ENCODE measurements at regions of chr11 and their contacts with region 1.

Region 1: GRCh38 chr11:83071567-83072349 is at the start of gene RAB30:
- H3K4me3 Mint-ChIP-seq: no peak within 1 kb of the TSS
- H3K27ac Mint-ChIP-seq: no peak within 1 kb of the TSS
- H3K4me1 Mint-ChIP-seq: peaks cover 48% of the 10 kb centered on the region
- H3K27me3 Mint-ChIP-seq: peaks cover 24% of the 10 kb centered on the region

Region 2: GRCh38 chr11:83007909-83008580 is 63.7 kb before region 1 on chr11:
- intact Hi-C with region 1: loop called (anchors 2 kb)
- H3K4me3 Mint-ChIP-seq: no peak overlapping the region
- H3K27ac Mint-ChIP-seq: peak overlapping the region; percentile 62
- H3K4me1 Mint-ChIP-seq: peaks cover 23% of the 10 kb centered on the region
- H3K27me3 Mint-ChIP-seq: no peaks in the 10 kb centered on the region

Region 3: DNA sequence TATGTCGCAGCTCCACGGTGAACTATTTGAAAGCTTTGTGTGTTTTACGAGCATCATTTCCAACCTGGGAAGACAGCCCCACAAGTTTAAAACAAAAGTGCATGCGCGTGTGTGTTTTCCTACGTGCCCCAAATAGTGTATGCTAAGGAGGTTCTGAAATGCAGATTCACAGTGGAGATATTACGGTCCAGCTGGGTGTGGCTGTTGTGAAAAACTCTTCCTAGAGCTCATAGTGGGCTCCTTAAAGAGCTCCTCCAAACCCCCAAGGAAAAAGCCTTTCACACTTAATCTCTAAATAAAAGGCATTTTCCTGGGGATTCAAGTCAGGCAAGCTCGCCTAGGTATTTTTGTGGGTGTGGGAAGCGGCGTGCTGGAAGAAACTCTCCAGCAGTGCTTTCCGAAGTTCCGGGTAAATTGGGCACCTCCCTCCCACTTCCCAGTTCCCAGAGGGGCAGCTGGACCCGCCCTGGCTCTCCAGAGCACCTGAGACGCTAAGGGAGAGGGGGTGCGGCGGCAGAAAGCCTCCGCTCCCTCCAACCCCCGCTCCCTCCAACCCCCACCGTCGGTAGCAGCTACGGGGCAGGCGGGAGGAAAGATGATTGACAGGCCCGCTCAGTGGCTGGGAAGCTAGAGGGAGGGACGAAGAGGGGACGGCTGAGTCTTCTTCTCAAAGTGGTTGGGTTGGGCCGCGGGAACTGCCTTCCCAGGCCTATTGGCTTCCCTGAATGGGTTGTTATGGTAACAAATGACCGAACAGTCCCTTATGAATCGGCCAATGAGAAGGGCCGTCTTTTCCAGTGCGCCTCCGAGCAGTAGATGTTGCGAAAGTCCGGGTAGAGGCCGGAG is 84.6 kb after region 1 on chr11:
- intact Hi-C with region 1: loop called (anchors 2 kb)
- H3K4me3 Mint-ChIP-seq: peak overlapping the region; percentile 96
- H3K27ac Mint-ChIP-seq: peak overlapping the region; percentile 100
- H3K4me1 Mint-ChIP-seq: peaks cover 19% of the 10 kb centered on the region
- H3K27me3 Mint-ChIP-seq: no peaks in the 10 kb centered on the region

Region 4: DNA sequence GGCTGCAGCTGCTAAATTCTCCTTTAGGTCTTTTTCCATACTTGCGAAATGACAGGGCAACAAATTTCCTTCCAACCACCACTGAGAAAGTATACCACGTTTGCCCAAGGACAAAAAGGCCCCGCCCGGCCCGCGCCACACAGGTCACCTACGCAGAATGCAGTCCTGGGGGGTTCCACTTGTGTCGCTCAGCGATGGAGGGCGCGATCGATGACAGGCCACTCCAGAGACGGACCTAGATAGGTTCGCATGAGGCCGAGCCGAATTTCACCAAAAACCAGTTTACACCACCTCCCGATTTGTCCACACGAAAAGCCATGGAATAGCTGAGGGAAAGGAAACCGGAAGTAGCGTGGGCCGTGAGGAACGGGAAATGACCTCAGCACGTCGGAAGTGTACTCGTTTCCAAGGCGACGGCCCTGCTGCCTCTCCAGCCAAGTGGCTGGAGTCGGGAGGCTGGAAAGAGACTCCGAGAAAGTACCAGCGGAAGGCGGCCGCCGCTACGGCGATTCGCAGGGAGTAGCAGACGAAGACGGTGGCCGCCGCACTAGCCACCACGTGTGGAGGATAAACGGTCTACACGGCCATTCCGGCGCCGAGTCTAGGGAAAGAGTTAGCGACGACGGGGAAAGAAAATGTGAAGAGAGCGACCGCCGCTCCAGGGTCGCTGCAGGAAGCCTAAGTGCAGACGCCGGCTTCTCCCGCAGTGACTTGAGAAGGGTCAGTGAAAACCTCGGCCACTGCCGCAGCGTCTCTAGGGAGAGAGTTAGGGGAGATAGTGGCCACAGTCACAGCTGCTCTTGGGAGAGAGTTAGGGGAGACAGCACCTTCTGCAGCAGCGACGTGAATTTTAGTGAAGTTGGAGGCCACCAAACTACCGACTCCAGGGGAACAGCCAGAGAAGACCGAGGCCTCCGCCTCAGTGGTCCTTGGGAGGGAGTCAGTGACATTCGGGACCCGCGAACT is 121.8 kb after region 1 on chr11 and contains the start of gene ANKRD42:
- intact Hi-C with region 1: loop called (anchors 10 kb)
- H3K4me3 Mint-ChIP-seq: peak within 1 kb of the TSS; percentile 99
- H3K27ac Mint-ChIP-seq: peak within 1 kb of the TSS; percentile 95
- H3K4me1 Mint-ChIP-seq: peaks cover 38% of the 10 kb centered on the region
- H3K27me3 Mint-ChIP-seq: no peaks in the 10 kb centered on the region

Region 5: DNA sequence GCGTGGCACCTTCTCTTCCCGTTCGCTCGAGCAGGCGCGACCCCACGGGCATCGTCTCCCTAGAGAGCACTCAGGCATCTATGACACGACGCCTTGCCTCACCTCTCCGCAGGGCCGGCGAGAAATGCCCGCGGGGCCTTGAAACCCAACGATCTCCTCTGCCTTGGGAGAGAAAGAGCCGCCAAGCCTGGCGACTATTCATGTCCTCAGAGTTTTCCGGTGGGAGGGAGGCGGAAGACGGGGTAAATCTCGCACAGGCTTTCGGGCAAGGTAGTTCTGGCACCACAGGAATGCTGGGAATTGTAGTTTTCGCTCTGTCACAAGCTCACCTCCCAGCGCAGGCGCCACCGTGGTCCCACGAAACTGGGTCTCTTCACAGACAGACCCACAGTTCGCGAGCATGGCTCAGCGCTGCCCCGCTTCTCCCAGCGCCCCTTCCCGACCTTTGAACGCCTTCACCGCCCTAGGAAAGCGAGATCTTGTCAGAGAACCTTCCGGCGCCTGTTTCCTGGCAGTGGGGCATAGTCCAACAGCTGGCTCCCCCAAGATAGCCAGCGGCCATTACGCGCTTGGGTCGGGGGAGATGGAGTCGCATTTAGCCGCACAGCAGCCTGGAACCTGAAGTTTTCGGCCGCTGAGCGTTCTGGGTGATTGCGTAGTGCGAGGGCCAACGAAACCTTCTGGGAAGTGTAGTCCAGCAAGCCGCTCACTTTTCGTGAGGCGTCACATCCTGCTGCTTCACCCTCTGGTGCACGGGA is 214.2 kb after region 1 on chr11 and contains the start of gene CCDC90B:
- intact Hi-C with region 1: loop called (anchors 5 kb)
- H3K4me3 Mint-ChIP-seq: peak within 1 kb of the TSS; percentile 97
- H3K27ac Mint-ChIP-seq: peak within 1 kb of the TSS; percentile 100
- H3K4me1 Mint-ChIP-seq: peaks cover 32% of the 10 kb centered on the region
- H3K27me3 Mint-ChIP-seq: no peaks in the 10 kb centered on the region

Measured in dendritic cell treated with granulocyte-macrophage colony-stimulating factor and Interleukin-4, amounts not matched to agents 40 ng/mL and 50 ng/mL, for 4 days (primary cell).